OCI-LY7 (cell line): ENCODE measurements at regions of chr22 and their contacts with region 1.

Region 1: GRCh38 chr22:25048659-25049647 is 96.4 kb downstream of the KIAA1671 start:
- DNase-seq: peak; percentile 67
- H3K4me3 ChIP-seq: no peak overlapping the region
- H3K27ac ChIP-seq: no peak overlapping the region
- H3K4me1 ChIP-seq: no peaks in the 10 kb centered on the region
- CTCF ChIP-seq: peak; percentile 87

Region 2: GRCh38 chr22:24938741-24939341 is 110.1 kb before region 1 on chr22:
- CTCF ChIA-PET with region 1: no interaction called
- POLR2A ChIA-PET with region 1: no interaction called
- intact Hi-C with region 1: loop called (anchors 2 kb)
- DNase-seq: peak; percentile 59
- H3K4me3 ChIP-seq: no peak overlapping the region
- H3K27ac ChIP-seq: no peak overlapping the region
- H3K4me1 ChIP-seq: no peaks in the 10 kb centered on the region
- CTCF ChIP-seq: peak; percentile 85